ENCODE measurements at regions of chr21 and their contacts with region 1.

Region 1: DNA sequence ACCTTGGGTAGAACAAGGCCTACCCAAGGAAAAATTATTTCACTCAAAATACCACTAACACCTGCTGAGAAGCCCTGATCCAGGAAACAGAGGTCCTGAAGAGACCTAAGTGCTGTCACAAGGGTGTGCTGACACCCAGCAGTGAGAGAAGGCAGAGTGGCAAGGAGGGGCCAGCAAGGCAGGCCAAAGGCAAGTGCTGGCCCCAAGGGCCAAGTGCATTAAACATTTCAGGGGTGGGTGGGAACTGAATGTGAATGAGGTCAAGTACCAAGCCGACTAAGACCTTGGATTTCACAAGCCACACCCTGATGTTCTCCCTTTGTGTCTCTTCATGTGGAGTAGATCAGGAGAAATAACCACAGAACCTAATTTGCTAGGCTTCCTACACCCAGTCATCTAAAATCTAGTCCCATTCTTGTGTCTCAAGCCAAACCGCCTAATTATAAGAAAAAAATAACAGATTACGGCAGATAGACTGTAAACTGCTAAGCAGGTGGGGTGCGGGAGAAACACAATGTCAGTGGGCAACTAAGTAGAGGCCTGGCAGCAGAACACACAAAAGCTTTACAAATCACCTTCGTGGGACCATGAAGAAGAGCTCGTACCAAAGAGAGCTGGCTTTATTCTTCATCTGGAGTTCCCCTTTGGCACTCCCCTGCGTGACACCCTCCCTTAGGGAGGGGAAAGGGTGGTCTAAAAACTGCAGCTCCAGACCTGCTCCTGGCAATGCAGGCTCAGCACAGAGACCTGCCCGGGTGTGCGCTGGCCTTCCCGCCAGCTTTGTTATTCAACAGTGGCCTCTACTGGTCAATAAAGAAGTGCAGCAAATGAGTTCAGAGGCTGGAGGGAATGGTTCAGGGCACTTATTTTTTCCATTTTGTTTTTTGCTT is 8.7 kb downstream of the UBE2G2 start:
- DNase-seq: peak in 1 of 2 donors; percentile 46
- ATAC-seq: peak; percentile 91

Region 2: GRCh38 chr21:44510508-44511210 is 282.3 kb before region 1 on chr21:
- intact Hi-C with region 1: loop called in 1 of 2 experiments (anchors 10 kb)
- DNase-seq: peak; percentile 44 to 76
- ATAC-seq: peak; percentile 87

Measured in left colon (tissue), 2 donors.